Left ventricle myocardium inferior (tissue), 1 donor: ENCODE measurements at regions of chr18 and their contacts with region 1.

Region 1: GRCh38 chr18:73381016-73381695 is 513.4 kb upstream of the NETO1 start:
- DNase-seq: no peak
- H3K4me3 ChIP-seq: no peak overlapping the region
- H3K27ac ChIP-seq: no peak overlapping the region
- H3K4me1 ChIP-seq: no peaks in the 10 kb centered on the region
- H3K27me3 ChIP-seq: no peaks in the 10 kb centered on the region
- CTCF ChIP-seq: no peak

Region 2: DNA sequence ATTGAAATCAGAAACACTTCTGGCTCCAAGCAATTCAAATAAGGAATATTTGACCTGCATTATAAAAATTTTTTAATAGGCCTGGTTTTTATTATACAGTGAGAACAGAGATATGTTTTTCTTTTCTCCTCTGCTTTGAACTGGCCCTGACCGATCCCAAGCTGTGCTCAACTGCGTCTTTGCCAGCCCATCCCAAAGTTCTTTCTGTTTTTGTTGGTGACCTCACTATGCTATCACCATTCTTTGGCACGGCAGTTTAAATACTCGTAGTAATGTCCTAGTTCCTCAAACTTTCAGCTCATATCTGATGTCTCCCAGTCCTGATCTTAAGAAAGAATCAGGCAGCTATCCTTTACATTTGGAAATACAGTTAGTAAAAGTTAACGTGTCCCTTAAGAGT is 471.1 kb before region 1 on chr18:
- intact Hi-C with region 1: loop called (anchors 10 kb)
- DNase-seq: no peak
- H3K4me3 ChIP-seq: no peak overlapping the region
- H3K27ac ChIP-seq: no peak overlapping the region
- H3K4me1 ChIP-seq: no peaks in the 10 kb centered on the region
- H3K27me3 ChIP-seq: no peaks in the 10 kb centered on the region
- CTCF ChIP-seq: no peak